CD4-positive, alpha-beta T cell (primary cell): ENCODE measurements at regions of chr10 and their contacts with region 1.

Region 1: GRCh38 chr10:37289840-37290464 is 164.6 kb downstream of the ANKRD30A start:
- DNase-seq: no peak
- ATAC-seq: no peak
- H3K4me3 ChIP-seq: no peak overlapping the region
- H3K4me3 Mint-ChIP-seq: no peak overlapping the region
- H3K27ac ChIP-seq: no peak overlapping the region
- H3K27ac Mint-ChIP-seq: no peak overlapping the region
- H3K4me1 ChIP-seq: no peaks in the 10 kb centered on the region
- H3K4me1 Mint-ChIP-seq: no peaks in the 10 kb centered on the region
- H3K27me3 ChIP-seq: no peaks in the 10 kb centered on the region
- H3K27me3 Mint-ChIP-seq: no peaks in the 10 kb centered on the region
- CTCF ChIP-seq: no peak

Region 2: GRCh38 chr10:37234692-37235091 is 55.3 kb before region 1 on chr10:
- CTCF ChIA-PET with region 1: no interaction called
- POLR2A ChIA-PET with region 1: no interaction called
- intact Hi-C with region 1: no loop called
- DNase-seq: no peak
- ATAC-seq: no peak
- H3K4me3 ChIP-seq: no peak overlapping the region
- H3K4me3 Mint-ChIP-seq: no peak overlapping the region
- H3K27ac ChIP-seq: no peak overlapping the region
- H3K27ac Mint-ChIP-seq: no peak overlapping the region
- H3K4me1 ChIP-seq: no peaks in the 10 kb centered on the region
- H3K4me1 Mint-ChIP-seq: no peaks in the 10 kb centered on the region
- H3K27me3 ChIP-seq: no peaks in the 10 kb centered on the region
- H3K27me3 Mint-ChIP-seq: no peaks in the 10 kb centered on the region
- CTCF ChIP-seq: no peak

Region 3: GRCh38 chr10:37344413-37344812 is 54.5 kb after region 1 on chr10:
- CTCF ChIA-PET with region 1: no interaction called
- POLR2A ChIA-PET with region 1: no interaction called
- intact Hi-C with region 1: loop called in 1 of 2 experiments (anchors 10 kb)
- DNase-seq: no peak
- ATAC-seq: no peak
- H3K4me3 ChIP-seq: no peak overlapping the region
- H3K4me3 Mint-ChIP-seq: no peak overlapping the region
- H3K27ac ChIP-seq: no peak overlapping the region
- H3K27ac Mint-ChIP-seq: no peak overlapping the region
- H3K4me1 ChIP-seq: no peaks in the 10 kb centered on the region
- H3K4me1 Mint-ChIP-seq: no peaks in the 10 kb centered on the region
- H3K27me3 ChIP-seq: no peaks in the 10 kb centered on the region
- H3K27me3 Mint-ChIP-seq: no peaks in the 10 kb centered on the region
- CTCF ChIP-seq: no peak